CD8-positive, alpha-beta T cell (primary cell): ENCODE measurements at regions of chr14 and their contacts with region 1.

Region 1: GRCh38 chr14:83689265-83689664 is 1840.7 kb upstream of the FLRT2 start:
- DNase-seq: no peak
- ATAC-seq: no peak
- H3K4me3 ChIP-seq: no peak overlapping the region
- H3K4me3 Mint-ChIP-seq: no peak overlapping the region
- H3K27ac ChIP-seq: no peak overlapping the region
- H3K27ac Mint-ChIP-seq: no peak overlapping the region
- H3K4me1 ChIP-seq: no peaks in the 10 kb centered on the region
- H3K4me1 Mint-ChIP-seq: no peaks in the 10 kb centered on the region
- H3K27me3 ChIP-seq: no peaks in the 10 kb centered on the region
- H3K27me3 Mint-ChIP-seq: no peaks in the 10 kb centered on the region
- CTCF ChIP-seq: no peak

Region 2: GRCh38 chr14:83347874-83348273 is 341.4 kb before region 1 on chr14:
- CTCF ChIA-PET with region 1: no interaction called
- POLR2A ChIA-PET with region 1: no interaction called
- intact Hi-C with region 1: no loop called
- DNase-seq: no peak
- ATAC-seq: no peak
- H3K4me3 ChIP-seq: no peak overlapping the region
- H3K4me3 Mint-ChIP-seq: no peak overlapping the region
- H3K27ac ChIP-seq: no peak overlapping the region
- H3K27ac Mint-ChIP-seq: no peak overlapping the region
- H3K4me1 ChIP-seq: no peaks in the 10 kb centered on the region
- H3K4me1 Mint-ChIP-seq: no peaks in the 10 kb centered on the region
- H3K27me3 ChIP-seq: no peaks in the 10 kb centered on the region
- H3K27me3 Mint-ChIP-seq: no peaks in the 10 kb centered on the region
- CTCF ChIP-seq: no peak

Region 3: DNA sequence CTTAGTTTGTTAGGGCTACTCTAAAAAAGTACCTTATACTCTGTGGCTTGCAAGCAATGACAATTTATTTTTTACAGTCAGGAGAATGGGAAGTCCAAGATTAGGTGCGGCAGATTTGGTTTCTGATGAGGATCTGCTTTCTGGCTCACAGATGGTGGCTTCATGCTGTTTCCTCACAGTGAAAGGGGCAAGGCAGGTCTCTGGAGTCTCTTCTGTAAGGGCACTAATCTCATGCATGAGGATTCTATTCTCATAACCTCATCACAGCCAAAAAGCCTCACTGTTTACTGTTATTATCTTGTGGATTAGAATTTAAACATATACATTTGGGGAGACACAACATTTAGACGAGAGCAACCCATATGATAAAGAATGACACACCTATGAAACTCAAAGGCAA is 198.2 kb before region 1 on chr14:
- CTCF ChIA-PET with region 1: no interaction called
- POLR2A ChIA-PET with region 1: no interaction called
- intact Hi-C with region 1: no loop called
- DNase-seq: no peak
- ATAC-seq: no peak
- H3K4me3 ChIP-seq: no peak overlapping the region
- H3K4me3 Mint-ChIP-seq: no peak overlapping the region
- H3K27ac ChIP-seq: no peak overlapping the region
- H3K27ac Mint-ChIP-seq: no peak overlapping the region
- H3K4me1 ChIP-seq: no peaks in the 10 kb centered on the region
- H3K4me1 Mint-ChIP-seq: no peaks in the 10 kb centered on the region
- H3K27me3 ChIP-seq: no peaks in the 10 kb centered on the region
- H3K27me3 Mint-ChIP-seq: no peaks in the 10 kb centered on the region
- CTCF ChIP-seq: no peak

Region 4: GRCh38 chr14:83757916-83758315 is 68.7 kb after region 1 on chr14:
- CTCF ChIA-PET with region 1: no interaction called
- POLR2A ChIA-PET with region 1: no interaction called
- intact Hi-C with region 1: loop called in 1 of 2 experiments (anchors 1 kb)
- DNase-seq: no peak
- ATAC-seq: no peak
- H3K4me3 ChIP-seq: no peak overlapping the region
- H3K4me3 Mint-ChIP-seq: no peak overlapping the region
- H3K27ac ChIP-seq: no peak overlapping the region
- H3K27ac Mint-ChIP-seq: no peak overlapping the region
- H3K4me1 ChIP-seq: no peaks in the 10 kb centered on the region
- H3K4me1 Mint-ChIP-seq: no peaks in the 10 kb centered on the region
- H3K27me3 ChIP-seq: no peaks in the 10 kb centered on the region
- H3K27me3 Mint-ChIP-seq: no peaks in the 10 kb centered on the region
- CTCF ChIP-seq: no peak